Ascending aorta (tissue), 2 donors: ENCODE measurements at regions of chr11 and their contacts with region 1.

Region 1: GRCh38 chr11:57567515-57568329 is at the start of gene UBE2L6:
- DNase-seq: peak; percentile 16 to 72
- H3K4me3 ChIP-seq: peak within 1 kb of the TSS; percentile 84 to 93
- H3K27ac ChIP-seq: peak within 1 kb of the TSS; percentile 78 to 82
- H3K4me1 ChIP-seq: peaks cover 6 to 20% of the 10 kb centered on the region in 2 donors
- H3K27me3 ChIP-seq: no peaks in the 10 kb centered on the region
- CTCF ChIP-seq: peak in 1 of 3 experiments; percentile 90
- total RNA-seq, gene UBE2L6: 44.9 TPM

Region 2: GRCh38 chr11:57597916-57598830 is 30.5 kb after region 1 on chr11:
- intact Hi-C with region 1: loop called (anchors 1 kb)
- DNase-seq: peak; percentile 42 to 89
- H3K4me3 ChIP-seq: peak overlapping the region; percentile 72
- H3K27ac ChIP-seq: peak overlapping the region; percentile 95 to 97
- H3K4me1 ChIP-seq: peaks cover 0 to 9% of the 10 kb centered on the region in 2 donors
- H3K27me3 ChIP-seq: no peaks in the 10 kb centered on the region
- CTCF ChIP-seq: no peak

Region 3: GRCh38 chr11:57644748-57645688 is 77.3 kb after region 1 on chr11:
- intact Hi-C with region 1: loop called (anchors 1 kb)
- DNase-seq: peak; percentile 46 to 92
- H3K4me3 ChIP-seq: peak overlapping the region in 1 of 2 donors; percentile 33
- H3K27ac ChIP-seq: peak overlapping the region; percentile 43 to 72
- H3K4me1 ChIP-seq: peaks cover 3 to 55% of the 10 kb centered on the region in 2 donors
- H3K27me3 ChIP-seq: peaks cover 6% of the 10 kb centered on the region
- CTCF ChIP-seq: peak; percentile 77 to 93 (median 87)

Region 4: GRCh38 chr11:57761301-57762234 is 193.8 kb after region 1 on chr11 and contains the start of gene CTNND1:
- intact Hi-C with region 1: loop called (anchors 5 kb)
- DNase-seq: peak; percentile 68 to 95
- H3K4me3 ChIP-seq: peak within 1 kb of the TSS; percentile 66 to 79
- H3K27ac ChIP-seq: peak within 1 kb of the TSS; percentile 87 to 96
- H3K4me1 ChIP-seq: peaks cover 0 to 21% of the 10 kb centered on the region in 2 donors
- H3K27me3 ChIP-seq: no peaks in the 10 kb centered on the region
- CTCF ChIP-seq: no peak
- total RNA-seq, gene CTNND1: 69.5 TPM

Region 5: DNA sequence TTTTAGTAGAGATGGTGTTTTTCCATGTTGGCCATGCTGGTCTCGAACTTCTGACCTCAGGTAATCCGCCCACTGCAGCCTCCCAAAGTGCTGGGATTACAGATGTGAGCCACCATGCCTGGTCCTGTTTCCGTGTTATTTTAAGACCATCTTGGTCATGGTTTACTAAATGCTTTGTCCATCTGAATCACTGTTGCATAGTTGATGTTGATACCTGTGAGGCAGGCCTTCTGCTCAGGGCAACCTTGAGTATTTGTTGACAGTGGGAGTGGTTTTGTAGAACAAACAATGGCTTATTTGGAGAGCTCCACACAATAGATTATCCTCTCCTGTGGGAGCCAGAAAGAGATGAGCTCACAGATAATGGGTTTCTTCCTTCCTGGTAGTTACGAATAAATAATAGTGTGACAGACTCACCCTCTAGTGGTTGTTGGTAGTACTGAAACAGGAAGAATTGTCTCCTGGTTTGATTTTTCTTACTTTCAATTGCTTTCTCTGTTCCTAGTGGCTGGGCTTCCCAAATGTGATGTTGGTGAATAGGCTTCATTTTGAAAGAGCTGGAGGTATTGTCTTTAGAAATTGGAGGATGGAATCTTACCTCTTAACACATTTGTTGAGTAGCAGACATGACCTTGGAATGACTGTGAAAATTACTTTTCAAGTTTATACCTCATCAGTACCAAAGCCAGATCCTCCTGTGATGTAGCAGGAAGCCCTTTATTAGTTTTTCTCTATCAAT is 232.9 kb after region 1 on chr11:
- intact Hi-C with region 1: loop called (anchors 10 kb)
- DNase-seq: no peak
- H3K4me3 ChIP-seq: no peak overlapping the region
- H3K27ac ChIP-seq: peak overlapping the region in 1 of 2 donors; percentile 37
- H3K4me1 ChIP-seq: peaks cover 3 to 10% of the 10 kb centered on the region in 2 donors
- H3K27me3 ChIP-seq: no peaks in the 10 kb centered on the region
- CTCF ChIP-seq: peak; percentile 75 to 78 (median 76)